PC-9 (cell line): ENCODE measurements at regions of chr10 and their contacts with region 1.

Region 1: DNA sequence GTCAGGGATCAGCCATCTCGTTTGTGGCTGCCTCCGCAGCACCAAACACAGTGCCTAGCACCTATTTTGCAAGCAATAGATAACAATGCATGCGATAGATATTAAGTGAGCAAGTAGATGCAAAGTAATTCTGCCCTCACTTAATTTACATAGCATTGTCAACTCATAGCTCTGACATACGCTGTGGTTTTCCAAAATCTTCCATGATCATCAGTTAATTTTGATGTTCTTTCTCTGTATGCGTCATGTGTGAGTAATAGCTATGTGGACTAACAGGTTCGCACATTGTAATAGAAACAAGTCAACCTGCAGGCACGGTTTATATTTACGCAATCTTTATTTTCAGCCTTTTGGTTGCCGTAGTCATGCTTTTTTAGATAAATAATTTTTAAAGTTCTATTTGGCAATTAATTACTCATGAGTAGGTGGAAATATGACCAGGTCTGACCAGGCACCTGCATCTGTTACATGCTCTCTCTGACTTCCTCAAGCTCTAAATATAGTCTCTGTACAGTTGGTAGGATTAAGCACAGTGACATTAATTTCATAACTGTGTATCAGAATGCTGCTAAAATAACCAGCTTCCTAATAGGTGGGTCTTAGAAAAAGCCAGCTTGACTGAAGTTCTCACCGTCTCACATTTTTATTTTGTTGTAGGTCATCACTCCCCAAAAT is 13.3 kb downstream of the MAP3K8 start:
- DNase-seq: peak; percentile 31 to 95
- H3K4me3 ChIP-seq: peak overlapping the region; percentile 7; the same call in 1 of the 2 replicates
- H3K27ac ChIP-seq: peak overlapping the region; percentile 81
- H3K4me1 ChIP-seq: peaks cover 24% of the 10 kb centered on the region
- H3K27me3 ChIP-seq: no peaks in the 10 kb centered on the region
- CTCF ChIP-seq: no peak

Region 2: GRCh38 chr10:30092151-30092790 is 355.0 kb before region 1 on chr10:
- CTCF ChIA-PET with region 1: interaction called, 14 read pairs
- POLR2A ChIA-PET with region 1: no interaction called
- intact Hi-C with region 1: no loop called
- DNase-seq: no peak
- H3K4me3 ChIP-seq: no peak overlapping the region
- H3K27ac ChIP-seq: no peak overlapping the region
- H3K4me1 ChIP-seq: peaks cover 11% of the 10 kb centered on the region; the same call in 1 of the 2 replicates
- H3K27me3 ChIP-seq: no peaks in the 10 kb centered on the region
- CTCF ChIP-seq: no peak